H1 (cell line): ENCODE measurements at regions of chr1 and their contacts with region 1.

Region 1: GRCh38 chr1:212070720-212071302 is 35.3 kb downstream of the DTL start:
- DNase-seq: no peak
- H3K4me3 ChIP-seq: no peak overlapping the region
- H3K27ac ChIP-seq: no peak overlapping the region
- H3K4me1 ChIP-seq: no peaks in the 10 kb centered on the region
- H3K27me3 ChIP-seq: no peaks in the 10 kb centered on the region
- CTCF ChIP-seq: peak in 2 of 3 experiments; percentile 36 to 43; a peak in 2 of 4 replicates
- EP300 ChIP-seq: no peak
- POLR2A ChIP-seq: no peak
- RAD21 ChIP-seq: peak; percentile 77 to 78

Region 2: GRCh38 chr1:211991695-211992094 is 79.1 kb before region 1 on chr1:
- CTCF ChIA-PET with region 1: no interaction called
- POLR2A ChIA-PET with region 1: no interaction called
- DNase-seq: no peak
- H3K4me3 ChIP-seq: no peak overlapping the region
- H3K27ac ChIP-seq: no peak overlapping the region
- H3K4me1 ChIP-seq: no peaks in the 10 kb centered on the region
- H3K27me3 ChIP-seq: no peaks in the 10 kb centered on the region
- CTCF ChIP-seq: no peak
- EP300 ChIP-seq: no peak
- POLR2A ChIP-seq: no peak
- RAD21 ChIP-seq: no peak

Region 3: GRCh38 chr1:212024469-212025149 is 46.2 kb before region 1 on chr1:
- CTCF ChIA-PET with region 1: no interaction called
- POLR2A ChIA-PET with region 1: no interaction called
- DNase-seq: no peak
- H3K4me3 ChIP-seq: no peak overlapping the region
- H3K27ac ChIP-seq: no peak overlapping the region
- H3K4me1 ChIP-seq: peaks cover 0 to 2% (median 1%) of the 10 kb centered on the region in 4 experiments; a peak in 2 of 7 replicates
- H3K27me3 ChIP-seq: no peaks in the 10 kb centered on the region
- CTCF ChIP-seq: no peak
- EP300 ChIP-seq: no peak
- POLR2A ChIP-seq: no peak
- RAD21 ChIP-seq: no peak

Region 4: DNA sequence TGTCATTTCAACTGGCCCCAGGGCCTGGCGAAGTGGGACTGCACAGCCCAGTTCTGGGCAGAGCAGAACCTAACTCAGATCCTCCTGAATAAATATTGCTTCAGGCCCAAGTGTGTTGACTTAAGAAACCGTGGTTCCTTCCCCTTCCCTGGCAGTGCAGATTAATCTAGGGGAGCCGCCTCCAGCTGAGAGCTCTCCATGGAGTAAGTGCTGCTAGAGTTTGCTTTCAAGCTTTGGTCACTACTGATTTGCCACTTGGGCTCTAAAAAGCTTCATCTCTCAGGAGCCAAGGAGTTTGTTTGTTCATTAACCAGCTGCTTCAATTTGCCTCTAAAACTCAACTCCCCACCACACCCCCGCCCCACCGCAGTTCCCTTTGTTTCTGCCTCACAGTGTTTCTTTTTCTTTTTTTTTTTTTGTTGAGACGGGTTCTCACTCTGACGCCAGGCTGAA is 76.8 kb after region 1 on chr1:
- CTCF ChIA-PET with region 1: no interaction called
- POLR2A ChIA-PET with region 1: no interaction called
- DNase-seq: no peak
- H3K4me3 ChIP-seq: no peak overlapping the region
- H3K27ac ChIP-seq: no peak overlapping the region
- H3K4me1 ChIP-seq: peaks cover 0 to 4% (median 0%) of the 10 kb centered on the region in 4 experiments; a peak in 1 of 7 replicates
- H3K27me3 ChIP-seq: no peaks in the 10 kb centered on the region
- CTCF ChIP-seq: no peak
- EP300 ChIP-seq: no peak
- POLR2A ChIP-seq: no peak
- RAD21 ChIP-seq: no peak

Region 5: GRCh38 chr1:212284744-212285684 is 214.2 kb after region 1 on chr1 and contains the start of gene PPP2R5A:
- CTCF ChIA-PET with region 1: interaction called, 20 read pairs
- POLR2A ChIA-PET with region 1: interaction called, 3 read pairs
- DNase-seq: peak; percentile 93 to 98
- H3K4me3 ChIP-seq: peak within 1 kb of the TSS; percentile 85 to 92 (median 88)
- H3K27ac ChIP-seq: peak within 1 kb of the TSS; percentile 83
- H3K4me1 ChIP-seq: peaks cover 3 to 8% (median 6%) of the 10 kb centered on the region in 4 experiments; a peak in 5 of 7 replicates
- H3K27me3 ChIP-seq: no peaks in the 10 kb centered on the region
- CTCF ChIP-seq: peak; percentile 31 to 55 (median 48)
- EP300 ChIP-seq: peak in 1 of 2 experiments; percentile 26; a peak in 1 of 3 replicates
- POLR2A ChIP-seq: peak; percentile 10 to 91
- RAD21 ChIP-seq: peak in 1 of 2 experiments; percentile 12; a peak in 2 of 4 replicates
- total RNA-seq, gene PPP2R5A: 36.3 and 36.8 TPM in 2 replicates

Region 6: DNA sequence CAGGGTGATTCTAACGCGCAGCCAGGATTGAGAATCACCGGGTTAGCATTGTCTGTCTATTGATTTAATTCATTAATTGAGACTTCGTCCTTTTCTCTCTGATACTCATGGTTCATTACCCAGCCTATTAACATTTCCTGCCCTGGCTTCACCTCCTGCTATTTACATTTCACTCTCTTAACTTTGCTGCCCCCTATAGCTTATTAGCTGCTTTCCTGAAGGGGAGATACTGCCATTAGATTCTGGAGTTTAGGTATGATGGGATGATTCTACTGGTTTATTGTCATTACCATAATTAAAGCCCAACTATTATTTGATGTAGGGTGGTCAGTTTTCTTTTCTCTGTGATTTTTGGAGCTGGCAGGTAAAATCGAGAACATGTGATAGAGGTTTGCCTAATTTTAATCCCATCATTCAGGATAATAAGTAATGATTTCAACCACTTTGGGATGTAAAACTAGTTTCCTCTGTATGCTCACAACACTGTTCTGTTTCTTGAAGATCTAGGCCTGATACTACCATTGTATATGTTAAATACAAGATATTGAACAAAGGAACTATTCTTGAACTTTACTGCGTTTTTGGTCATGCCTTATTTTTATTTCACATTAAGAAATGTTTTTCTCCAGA is 220.8 kb after region 1 on chr1:
- CTCF ChIA-PET with region 1: interaction called, 25 read pairs
- POLR2A ChIA-PET with region 1: interaction called, 3 read pairs
- DNase-seq: no peak
- H3K4me3 ChIP-seq: no peak overlapping the region
- H3K27ac ChIP-seq: no peak overlapping the region
- H3K4me1 ChIP-seq: peaks cover 0 to 14% (median 7%) of the 10 kb centered on the region in 4 experiments; a peak in 4 of 7 replicates
- H3K27me3 ChIP-seq: no peaks in the 10 kb centered on the region
- CTCF ChIP-seq: peak in 2 of 3 experiments; percentile 59 to 75; a peak in 2 of 4 replicates
- EP300 ChIP-seq: no peak
- POLR2A ChIP-seq: no peak
- RAD21 ChIP-seq: peak; percentile 76 to 80

Region 7: DNA sequence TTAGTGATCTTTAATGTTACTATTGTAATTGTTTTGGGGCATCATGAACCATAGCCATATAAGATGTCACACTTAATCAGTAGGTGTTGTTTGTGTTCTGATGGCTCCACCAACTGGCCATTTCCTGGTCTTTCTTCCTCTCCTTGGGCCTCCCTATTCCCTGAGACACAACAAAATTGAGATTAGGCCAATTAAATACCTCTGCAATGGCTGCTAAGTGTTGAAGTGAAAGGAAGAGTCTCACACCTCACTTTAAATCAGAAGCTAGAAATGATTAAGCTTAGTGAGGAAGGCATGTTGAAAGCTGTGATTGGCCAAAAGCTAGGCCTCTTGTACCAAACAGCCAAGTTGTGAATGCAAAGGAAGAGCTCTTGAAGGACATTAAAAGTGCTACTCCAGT is 245.1 kb after region 1 on chr1:
- CTCF ChIA-PET with region 1: interaction called, 27 read pairs
- POLR2A ChIA-PET with region 1: no interaction called
- DNase-seq: peak in 1 of 2 experiments; percentile 31
- H3K4me3 ChIP-seq: no peak overlapping the region
- H3K27ac ChIP-seq: no peak overlapping the region
- H3K4me1 ChIP-seq: peaks cover 0 to 6% (median 2%) of the 10 kb centered on the region in 4 experiments; a peak in 2 of 7 replicates
- H3K27me3 ChIP-seq: no peaks in the 10 kb centered on the region
- CTCF ChIP-seq: peak in 2 of 3 experiments; percentile 46 to 60; a peak in 3 of 4 replicates
- EP300 ChIP-seq: no peak
- POLR2A ChIP-seq: no peak
- RAD21 ChIP-seq: peak; percentile 75 to 78

Region 8: DNA sequence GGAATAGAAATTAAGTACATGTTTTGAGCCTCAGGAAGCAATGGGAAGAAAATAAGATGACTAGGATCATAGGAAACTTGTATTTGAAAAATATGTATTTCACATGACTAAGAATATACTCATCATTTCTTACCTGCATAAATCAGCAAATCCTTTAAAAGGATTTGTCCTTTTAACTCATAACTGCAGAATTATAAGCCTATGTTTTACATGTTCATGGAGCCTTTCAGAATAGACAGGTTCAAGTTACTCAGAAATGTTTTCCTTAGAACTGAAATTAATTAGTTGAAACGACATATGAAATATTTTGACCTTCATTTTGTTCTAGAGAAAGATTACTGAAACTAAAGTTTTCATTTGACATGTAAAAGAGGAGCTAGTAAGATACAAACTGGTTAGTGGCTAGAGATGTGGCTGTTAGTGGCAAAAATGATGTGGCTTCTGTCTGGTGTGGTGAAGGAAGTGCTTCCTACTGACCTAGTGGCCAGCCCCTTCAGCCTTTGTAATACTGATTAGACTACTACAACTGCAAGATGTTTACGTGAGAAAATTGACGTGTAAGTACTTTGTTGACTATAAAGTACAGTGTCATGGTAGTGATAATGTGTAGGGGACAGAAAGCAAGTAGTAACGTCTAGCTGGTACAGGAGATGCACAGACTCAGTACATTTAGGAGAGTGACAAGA is 289.1 kb after region 1 on chr1:
- CTCF ChIA-PET with region 1: interaction called, 64 read pairs
- POLR2A ChIA-PET with region 1: no interaction called
- DNase-seq: no peak
- H3K4me3 ChIP-seq: no peak overlapping the region
- H3K27ac ChIP-seq: no peak overlapping the region
- H3K4me1 ChIP-seq: no peaks in the 10 kb centered on the region
- H3K27me3 ChIP-seq: no peaks in the 10 kb centered on the region
- CTCF ChIP-seq: no peak
- EP300 ChIP-seq: no peak
- POLR2A ChIP-seq: no peak
- RAD21 ChIP-seq: no peak

Region 9: DNA sequence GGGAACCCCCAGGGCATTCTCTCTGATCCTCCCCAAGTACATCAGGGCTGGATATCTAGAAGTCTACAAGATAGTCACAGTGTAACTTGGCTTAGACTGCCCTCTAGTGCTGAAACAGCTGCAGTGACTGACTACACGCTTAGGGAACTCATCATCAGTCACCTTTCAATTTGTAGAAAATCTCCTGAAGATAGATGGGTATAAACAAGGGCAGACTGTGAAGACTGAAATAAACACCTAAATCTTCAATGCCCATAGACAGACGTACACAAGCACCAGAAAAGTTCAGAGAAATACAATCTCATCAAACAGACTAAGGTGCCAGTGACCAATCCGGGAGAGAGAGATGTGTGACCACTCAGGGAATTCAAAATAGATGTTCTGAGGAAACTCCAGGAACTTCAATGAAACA is 297.3 kb after region 1 on chr1:
- CTCF ChIA-PET with region 1: interaction called, 64 read pairs
- POLR2A ChIA-PET with region 1: no interaction called
- DNase-seq: peak; percentile 21 to 58
- H3K4me3 ChIP-seq: no peak overlapping the region
- H3K27ac ChIP-seq: no peak overlapping the region
- H3K4me1 ChIP-seq: no peaks in the 10 kb centered on the region
- H3K27me3 ChIP-seq: no peaks in the 10 kb centered on the region
- CTCF ChIP-seq: peak in 2 of 3 experiments; percentile 68 to 91; a peak in 3 of 4 replicates
- EP300 ChIP-seq: no peak
- POLR2A ChIP-seq: no peak
- RAD21 ChIP-seq: peak; percentile 89 to 92